Gastrocnemius medialis (tissue), 4 donors: ENCODE measurements at regions of chr19 and their contacts with region 1.

Region 1: DNA sequence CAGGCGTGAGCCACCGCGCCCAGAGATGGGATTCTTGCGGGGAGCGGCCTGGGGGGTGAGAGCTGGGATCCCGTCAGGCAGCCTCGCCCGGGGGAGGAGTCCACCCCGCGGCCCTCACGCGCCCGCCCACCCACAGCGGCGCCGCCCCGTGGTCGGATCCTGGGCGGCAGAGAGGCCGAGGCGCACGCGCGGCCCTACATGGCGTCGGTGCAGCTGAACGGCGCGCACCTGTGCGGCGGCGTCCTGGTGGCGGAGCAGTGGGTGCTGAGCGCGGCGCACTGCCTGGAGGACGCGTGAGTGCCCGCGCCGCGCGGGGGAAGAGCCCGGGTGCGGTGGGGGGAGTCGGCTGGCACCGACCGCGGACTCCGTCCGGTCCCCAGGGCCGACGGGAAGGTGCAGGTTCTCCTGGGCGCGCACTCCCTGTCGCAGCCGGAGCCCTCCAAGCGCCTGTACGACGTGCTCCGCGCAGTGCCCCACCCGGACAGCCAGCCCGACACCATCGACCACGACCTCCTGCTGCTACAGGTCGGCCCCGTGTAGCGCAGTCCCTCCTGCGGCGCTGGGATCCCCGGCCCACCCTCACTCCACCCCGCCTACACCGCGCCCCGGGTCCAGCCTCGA is 1.1 kb downstream of the CFD start:
- DNase-seq: peak in 1 of 2 donors; percentile 68
- ATAC-seq: peak in 1 of 2 donors; percentile 9
- H3K4me3 ChIP-seq: peak overlapping the region; percentile 31 to 54 (median 42)
- H3K27ac ChIP-seq: peak overlapping the region in 2 of 4 donors; percentile 68 to 75
- H3K4me1 ChIP-seq: no peaks in the 10 kb centered on the region
- H3K27me3 ChIP-seq: peaks cover 35 to 59% (median 54%) of the 10 kb centered on the region in 3 donors
- CTCF ChIP-seq: no peak
- POLR2A ChIP-seq: no peak

Region 2: DNA sequence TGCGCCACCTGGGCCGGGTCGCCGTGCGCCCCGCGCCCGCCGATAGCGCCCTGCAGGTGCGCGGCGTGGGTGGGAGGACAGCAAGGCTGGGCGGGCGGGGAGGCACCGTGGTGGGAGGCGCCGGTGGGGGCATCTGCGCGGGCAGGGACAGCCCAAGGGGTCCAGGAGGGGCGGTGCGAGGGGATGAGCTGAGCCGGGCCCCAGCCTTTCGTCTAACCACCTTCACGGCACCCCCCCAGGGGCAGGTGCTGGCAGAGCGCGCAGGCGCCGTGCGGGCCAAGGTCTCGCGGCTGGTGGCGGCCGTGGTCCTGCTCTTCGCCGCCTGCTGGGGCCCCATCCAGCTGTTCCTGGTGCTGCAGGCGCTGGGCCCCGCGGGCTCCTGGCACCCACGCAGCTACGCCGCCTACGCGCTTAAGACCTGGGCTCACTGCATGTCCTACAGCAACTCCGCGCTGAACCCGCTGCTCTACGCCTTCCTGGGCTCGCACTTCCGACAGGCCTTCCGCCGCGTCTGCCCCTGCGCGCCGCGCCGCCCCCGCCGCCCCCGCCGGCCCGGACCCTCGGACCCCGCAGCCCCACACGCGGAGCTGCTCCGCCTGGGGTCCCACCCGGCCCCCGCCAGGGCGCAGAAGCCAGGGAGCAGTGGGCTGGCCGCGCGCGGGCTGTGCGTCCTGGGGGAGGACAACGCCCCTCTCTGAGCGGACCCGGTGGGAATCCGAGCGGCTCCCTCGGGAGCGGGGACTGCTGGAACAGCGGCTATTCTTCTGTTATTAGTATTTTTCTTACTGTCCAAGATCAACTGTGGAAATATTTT is 59.7 kb after region 1 on chr19:
- in situ Hi-C with region 1: no loop called
- intact Hi-C with region 1: loop called (anchors 2 kb)
- DNase-seq: no peak
- ATAC-seq: no peak
- H3K4me3 ChIP-seq: peak overlapping the region in 1 of 4 donors; percentile 25
- H3K27ac ChIP-seq: no peak overlapping the region
- H3K4me1 ChIP-seq: peaks cover 11 to 18% of the 10 kb centered on the region in 2 donors
- H3K27me3 ChIP-seq: peaks cover 37 to 57% (median 53%) of the 10 kb centered on the region in 3 donors
- CTCF ChIP-seq: no peak
- POLR2A ChIP-seq: no peak